Activated CD4-positive, alpha-beta memory T cell treated with anti-CD3 and anti-CD28 coated beads, Interleukin-2, amount 10 ng/mL, durations not matched to agents 7 days and 5 days (primary cell): ENCODE measurements at regions of chr2 and their contacts with region 1.

Region 1: DNA sequence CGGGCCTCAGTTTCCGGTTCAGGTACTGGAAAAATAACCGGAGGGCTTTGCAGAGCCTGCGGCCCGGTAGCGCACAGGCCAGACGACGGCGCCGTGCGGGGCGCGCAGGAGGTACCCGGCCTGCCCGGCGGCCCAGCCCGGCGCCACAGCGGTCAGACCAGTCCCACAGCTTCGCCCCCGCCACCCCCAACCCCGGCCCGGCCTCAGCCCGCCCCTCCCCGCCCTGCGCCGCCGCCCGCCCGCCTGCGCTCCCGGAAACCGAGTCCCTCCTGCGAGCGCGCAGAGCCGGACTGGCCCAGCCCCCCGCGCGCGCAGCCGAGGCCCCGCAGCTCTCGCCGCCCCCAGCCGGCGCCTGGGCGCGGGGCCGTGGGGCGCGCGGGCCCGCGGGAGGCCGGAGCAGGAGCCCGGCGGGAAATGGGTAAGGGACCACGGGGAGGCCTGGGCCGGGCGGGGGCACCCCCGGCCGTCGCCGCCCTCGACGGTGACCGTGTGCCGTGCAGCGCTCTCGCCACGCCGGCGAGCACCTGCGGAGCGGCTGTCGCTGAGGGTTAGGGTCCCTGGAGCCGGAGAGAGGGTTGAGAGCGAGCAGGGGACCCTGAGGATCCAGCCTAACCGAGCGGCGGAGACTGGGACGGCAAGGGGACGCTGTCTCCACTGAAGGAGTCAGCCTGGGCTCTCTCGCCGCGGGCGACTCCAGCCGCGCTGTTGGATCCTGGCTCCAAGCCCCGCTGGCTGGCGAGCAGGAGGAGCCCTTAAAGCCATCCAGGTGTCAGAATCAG is 16.5 kb upstream of the PSD4 start:
- DNase-seq: peak; percentile 57
- H3K4me3 Mint-ChIP-seq: peak overlapping the region; percentile 79
- H3K27ac Mint-ChIP-seq: peak overlapping the region; percentile 64
- H3K4me1 Mint-ChIP-seq: peaks cover 18% of the 10 kb centered on the region
- H3K27me3 Mint-ChIP-seq: peaks cover 8% of the 10 kb centered on the region

Region 2: GRCh38 chr2:113105047-113105785 is 52.1 kb before region 1 on chr2:
- CTCF ChIA-PET with region 1: no interaction called
- POLR2A ChIA-PET with region 1: no interaction called
- DNase-seq: peak; percentile 55
- H3K4me3 Mint-ChIP-seq: no peak overlapping the region
- H3K27ac Mint-ChIP-seq: peak overlapping the region; percentile 62
- H3K4me1 Mint-ChIP-seq: peaks cover 51% of the 10 kb centered on the region
- H3K27me3 Mint-ChIP-seq: peaks cover 4% of the 10 kb centered on the region

Region 3: DNA sequence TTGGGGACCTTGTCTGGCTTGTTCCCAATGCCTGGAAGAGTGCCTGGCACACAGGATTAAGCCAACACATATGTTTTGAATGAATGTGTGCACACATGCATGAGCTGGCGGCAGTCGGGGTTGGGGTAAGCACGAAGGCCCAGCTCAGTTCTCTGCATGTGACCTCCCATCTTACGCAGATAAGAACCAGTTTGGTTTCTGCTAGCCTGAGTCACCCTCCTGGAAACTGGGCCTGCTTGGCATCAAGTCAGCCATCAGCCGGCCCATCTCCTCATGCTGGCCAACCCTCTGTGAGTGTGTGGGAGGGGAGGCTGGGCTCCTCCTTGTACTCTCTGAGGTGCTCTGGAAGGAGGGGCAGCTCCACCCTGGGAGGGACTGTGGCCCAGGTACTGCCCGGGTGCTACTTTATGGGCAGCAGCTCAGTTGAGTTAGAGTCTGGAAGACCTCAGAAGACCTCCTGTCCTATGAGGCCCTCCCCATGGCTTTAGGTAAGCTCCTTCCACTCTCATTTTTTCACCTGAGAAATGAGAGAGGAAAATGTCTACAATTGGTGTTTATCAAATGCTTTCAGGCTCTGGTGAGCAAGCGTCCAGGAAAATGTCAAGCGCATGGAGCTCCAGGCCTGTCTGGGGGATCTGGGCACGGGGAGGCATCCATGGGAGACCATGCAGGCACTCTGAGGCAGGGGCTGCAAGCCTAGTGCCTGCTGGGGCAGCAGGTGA is 39.6 kb before region 1 on chr2:
- CTCF ChIA-PET with region 1: no interaction called
- POLR2A ChIA-PET with region 1: no interaction called
- DNase-seq: peak; percentile 49
- H3K4me3 Mint-ChIP-seq: no peak overlapping the region
- H3K27ac Mint-ChIP-seq: peak overlapping the region; percentile 33
- H3K4me1 Mint-ChIP-seq: peaks cover 24% of the 10 kb centered on the region
- H3K27me3 Mint-ChIP-seq: no peaks in the 10 kb centered on the region

Region 4: DNA sequence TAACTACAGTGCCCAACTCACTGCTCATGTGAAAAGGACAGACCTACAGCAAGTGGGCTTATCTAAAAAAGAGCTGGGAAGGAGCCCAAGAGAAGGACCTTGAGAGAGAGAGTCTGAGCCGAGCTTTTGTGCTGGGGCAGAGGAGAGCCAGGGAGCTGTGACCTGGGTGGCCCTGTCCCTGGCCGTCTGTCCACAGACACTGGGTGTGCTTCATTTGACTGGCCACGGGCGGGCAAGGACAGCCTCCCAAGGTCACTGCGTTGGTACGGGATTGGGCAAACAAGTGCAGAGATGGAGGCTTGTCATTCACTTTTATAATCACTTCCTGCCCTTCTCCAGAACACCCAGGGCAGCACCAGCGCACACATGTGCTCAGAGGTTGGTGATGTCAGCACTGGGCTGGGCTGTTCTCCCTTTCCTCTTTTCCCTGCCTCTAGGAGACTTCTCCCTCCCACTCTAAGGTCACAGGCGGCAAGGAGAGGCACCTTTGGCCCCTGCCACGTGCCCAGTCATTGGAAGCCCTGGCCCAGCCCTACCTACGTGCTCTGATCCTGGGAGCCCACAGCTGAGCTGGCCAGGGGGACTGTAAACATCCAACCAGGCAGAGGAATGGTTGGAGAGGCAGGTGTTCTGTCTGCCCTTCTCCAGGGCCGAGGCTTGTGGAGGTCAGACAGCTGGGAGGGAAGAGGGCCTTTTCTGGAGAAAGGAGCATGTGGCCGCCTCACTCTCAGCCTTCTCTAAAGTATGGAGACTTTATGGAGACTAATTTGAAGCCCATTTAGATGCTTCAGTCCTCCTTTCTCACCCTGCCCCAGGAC is 10.0 kb after region 1 on chr2:
- CTCF ChIA-PET with region 1: interaction called, 43 read pairs
- POLR2A ChIA-PET with region 1: interaction called, 108 read pairs
- DNase-seq: peak; percentile 51
- H3K4me3 Mint-ChIP-seq: no peak overlapping the region
- H3K27ac Mint-ChIP-seq: peak overlapping the region; percentile 75
- H3K4me1 Mint-ChIP-seq: peaks cover 62% of the 10 kb centered on the region
- H3K27me3 Mint-ChIP-seq: no peaks in the 10 kb centered on the region

Region 5: DNA sequence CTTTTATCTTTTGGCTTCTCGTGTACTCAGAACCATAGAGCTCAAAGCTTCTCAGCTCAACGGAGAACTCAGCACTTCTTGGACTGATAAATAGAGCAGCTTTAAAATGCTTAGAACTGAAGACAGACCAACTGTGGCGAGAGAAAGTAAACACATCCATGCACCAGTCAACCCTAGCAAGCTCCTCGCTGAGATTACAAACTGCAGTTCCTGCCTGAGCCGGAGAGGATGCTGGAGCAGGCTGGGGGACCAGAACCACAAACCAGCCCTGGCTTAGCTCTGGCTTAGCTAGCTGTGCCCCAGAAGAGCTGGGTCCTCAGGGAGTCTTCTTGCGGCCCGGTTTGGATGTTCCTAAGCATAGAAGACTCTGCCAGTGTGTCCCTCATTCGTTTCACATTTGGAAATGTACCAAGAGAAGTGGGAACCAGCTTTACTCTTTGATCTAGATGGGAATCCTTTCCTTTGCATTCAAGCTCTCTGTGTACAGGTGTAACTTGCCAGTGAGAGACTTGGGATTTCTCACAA is 115.8 kb after region 1 on chr2:
- CTCF ChIA-PET with region 1: no interaction called
- POLR2A ChIA-PET with region 1: no interaction called
- DNase-seq: peak; percentile 32
- H3K4me3 Mint-ChIP-seq: no peak overlapping the region
- H3K27ac Mint-ChIP-seq: no peak overlapping the region
- H3K4me1 Mint-ChIP-seq: peaks cover 10% of the 10 kb centered on the region
- H3K27me3 Mint-ChIP-seq: peaks cover 60% of the 10 kb centered on the region

Region 6: DNA sequence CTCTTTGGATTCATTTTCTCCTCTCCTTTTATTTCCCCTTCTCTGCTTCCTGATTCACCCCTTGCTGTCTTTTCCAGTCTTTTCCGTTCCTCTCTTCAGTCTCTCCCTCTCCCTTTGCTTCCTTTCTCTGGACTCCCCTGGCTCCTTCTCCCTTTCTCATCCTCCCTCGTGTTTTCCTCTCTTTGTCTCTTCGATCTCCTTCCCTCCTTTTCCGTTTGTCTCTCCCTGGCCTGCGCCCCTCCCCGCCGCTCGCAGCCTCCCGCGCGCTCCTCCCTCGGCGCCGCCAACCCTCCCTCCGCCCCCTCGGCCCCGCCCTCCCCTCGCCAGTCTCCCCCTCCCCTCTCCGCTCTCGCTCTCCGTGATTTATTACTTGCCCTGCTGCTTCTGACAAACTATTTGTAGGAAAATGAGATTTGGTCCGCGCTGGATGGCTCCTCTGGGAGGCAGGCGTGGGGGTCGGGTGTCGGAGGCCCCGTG is 167.4 kb after region 1 on chr2:
- CTCF ChIA-PET with region 1: no interaction called
- POLR2A ChIA-PET with region 1: no interaction called
- DNase-seq: peak; percentile 23
- H3K4me3 Mint-ChIP-seq: peak overlapping the region; percentile 54
- H3K27ac Mint-ChIP-seq: no peak overlapping the region
- H3K4me1 Mint-ChIP-seq: peaks cover 17% of the 10 kb centered on the region
- H3K27me3 Mint-ChIP-seq: peaks cover 24% of the 10 kb centered on the region